Heart right ventricle (tissue), 16 donors: ENCODE measurements at regions of chr3 and their contacts with region 1.

Region 1: DNA sequence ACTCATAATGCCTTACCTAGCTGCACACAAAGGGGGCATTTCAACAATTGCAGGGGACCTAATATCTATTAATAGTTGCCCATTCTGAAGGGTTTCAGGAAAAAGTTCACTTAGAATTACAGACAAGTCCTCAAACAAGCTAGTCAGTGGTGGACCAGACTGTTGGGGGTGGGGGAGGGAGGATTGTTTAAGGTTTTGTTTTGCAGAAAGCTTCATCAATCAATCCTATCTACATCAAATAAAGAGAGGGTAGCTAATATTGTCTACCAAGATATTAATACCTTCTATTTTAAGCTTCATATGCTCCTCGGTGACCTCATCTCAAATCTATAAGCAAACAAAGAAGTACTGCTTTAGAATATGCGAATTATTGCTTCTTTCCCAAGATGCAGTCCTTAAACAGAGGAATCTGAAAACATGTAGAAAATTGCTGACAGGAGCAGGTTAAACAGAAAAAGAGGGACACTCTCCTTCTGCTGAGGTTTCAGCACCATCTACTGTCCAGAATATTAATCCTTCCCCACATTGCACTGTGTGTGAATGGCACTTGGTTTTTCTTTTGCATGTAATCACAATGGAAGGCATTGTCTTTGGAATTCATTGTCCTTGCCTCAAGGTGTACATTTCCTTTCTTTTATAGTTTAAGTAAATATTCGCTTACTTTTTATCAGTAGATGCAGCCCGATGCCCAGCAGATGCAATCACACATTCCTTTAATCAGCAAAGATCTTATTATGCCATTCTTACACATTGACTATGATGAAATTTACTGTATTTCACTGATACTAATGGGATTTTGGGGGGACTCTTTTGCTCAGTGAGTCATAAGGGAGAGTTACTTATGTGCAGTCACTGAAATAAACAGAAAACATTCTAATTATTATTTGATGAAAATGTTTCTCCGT is 94.7 kb downstream of the IL5RA start:
- DNase-seq: no peak
- ATAC-seq: peak in 6 of 8 donors; percentile 59 to 83 (median 70)
- H3K4me3 ChIP-seq: no peak overlapping the region
- H3K27ac ChIP-seq: no peak overlapping the region
- H3K4me1 ChIP-seq: peaks cover 0 to 7% (median 0%) of the 10 kb centered on the region in 9 donors
- H3K27me3 ChIP-seq: peaks cover 0 to 12% (median 0%) of the 10 kb centered on the region in 7 donors
- CTCF ChIP-seq: peak in 8 of 9 donors; percentile 21 to 67 (median 58)

Region 2: GRCh38 chr3:1082108-1082507 is 1933.3 kb before region 1 on chr3:
- intact Hi-C with region 1: loop called in 5 of 10 experiments (anchors 5 to 10 kb)
- DNase-seq: peak in 1 of 2 donors; percentile 21
- ATAC-seq: no peak
- H3K4me3 ChIP-seq: no peak overlapping the region
- H3K27ac ChIP-seq: no peak overlapping the region
- H3K4me1 ChIP-seq: no peaks in the 10 kb centered on the region
- H3K27me3 ChIP-seq: no peaks in the 10 kb centered on the region
- CTCF ChIP-seq: peak; percentile 16 to 72 (median 55)

Region 3: DNA sequence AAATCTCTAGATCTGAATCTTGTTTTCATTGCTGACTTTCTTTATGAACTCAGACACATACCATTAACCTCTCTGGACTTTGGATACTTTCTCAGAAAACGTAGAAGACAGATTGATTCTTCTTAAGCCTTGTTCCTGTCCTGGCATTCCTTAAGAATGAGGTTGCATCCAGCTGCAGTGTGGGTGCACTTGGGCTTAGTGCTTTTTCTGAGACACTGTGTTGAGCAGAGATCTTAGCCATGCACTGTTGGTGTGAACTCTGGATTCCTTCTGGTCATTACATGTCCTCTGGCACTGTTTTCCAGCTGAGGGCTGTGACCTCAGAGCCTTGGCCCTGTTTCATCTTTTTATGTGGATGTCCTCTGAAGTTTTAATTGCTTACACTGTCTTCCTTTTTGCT is 488.5 kb before region 1 on chr3:
- intact Hi-C with region 1: no loop called
- DNase-seq: no peak
- ATAC-seq: peak in 2 of 8 donors; percentile 37 to 69
- H3K4me3 ChIP-seq: no peak overlapping the region
- H3K27ac ChIP-seq: no peak overlapping the region
- H3K4me1 ChIP-seq: peaks cover 0 to 4% (median 0%) of the 10 kb centered on the region in 9 donors
- H3K27me3 ChIP-seq: no peaks in the 10 kb centered on the region
- CTCF ChIP-seq: no peak

Region 4: DNA sequence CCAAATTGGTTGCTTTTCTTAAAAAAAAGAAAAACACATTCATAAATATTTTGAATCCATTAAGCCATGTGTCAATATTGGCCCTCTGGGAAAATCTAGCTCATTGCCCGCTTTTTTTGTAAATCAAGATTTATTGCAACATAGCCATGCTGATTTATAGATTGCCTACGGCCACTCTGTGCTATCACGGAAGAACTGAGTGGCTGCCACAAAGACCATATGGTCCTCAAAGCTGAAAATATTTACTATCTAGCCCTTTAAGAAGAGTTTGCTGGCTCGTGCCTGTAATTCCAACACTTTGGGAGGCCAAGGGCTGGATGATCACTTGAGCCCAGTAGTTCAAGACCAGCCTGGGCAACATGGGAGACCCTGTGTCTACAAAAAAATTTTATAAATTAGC is 48.9 kb after region 1 on chr3:
- intact Hi-C with region 1: no loop called
- DNase-seq: no peak
- ATAC-seq: no peak
- H3K4me3 ChIP-seq: no peak overlapping the region
- H3K27ac ChIP-seq: no peak overlapping the region
- H3K4me1 ChIP-seq: no peaks in the 10 kb centered on the region
- H3K27me3 ChIP-seq: no peaks in the 10 kb centered on the region
- CTCF ChIP-seq: no peak